A549 (cell line): ENCODE measurements at regions of chr17 and their contacts with region 1.

Region 1: GRCh38 chr17:16353317-16354174 is at the start of gene CENPV:
- DNase-seq: peak; percentile 72 to 91
- ATAC-seq: peak; percentile 80 to 89
- H3K4me3 ChIP-seq: peak within 1 kb of the TSS; percentile 71
- H3K27ac ChIP-seq: peak within 1 kb of the TSS; percentile 87 to 96
- H3K4me1 ChIP-seq: peaks cover 12% of the 10 kb centered on the region
- CTCF ChIP-seq: peak; percentile 78
- EP300 ChIP-seq: no peak
- POLR2A ChIP-seq: peak; percentile 82
- RAD21 ChIP-seq: no peak
- polyA plus RNA-seq, gene CENPV: 191 and 202 TPM in 2 replicates

Region 2: DNA sequence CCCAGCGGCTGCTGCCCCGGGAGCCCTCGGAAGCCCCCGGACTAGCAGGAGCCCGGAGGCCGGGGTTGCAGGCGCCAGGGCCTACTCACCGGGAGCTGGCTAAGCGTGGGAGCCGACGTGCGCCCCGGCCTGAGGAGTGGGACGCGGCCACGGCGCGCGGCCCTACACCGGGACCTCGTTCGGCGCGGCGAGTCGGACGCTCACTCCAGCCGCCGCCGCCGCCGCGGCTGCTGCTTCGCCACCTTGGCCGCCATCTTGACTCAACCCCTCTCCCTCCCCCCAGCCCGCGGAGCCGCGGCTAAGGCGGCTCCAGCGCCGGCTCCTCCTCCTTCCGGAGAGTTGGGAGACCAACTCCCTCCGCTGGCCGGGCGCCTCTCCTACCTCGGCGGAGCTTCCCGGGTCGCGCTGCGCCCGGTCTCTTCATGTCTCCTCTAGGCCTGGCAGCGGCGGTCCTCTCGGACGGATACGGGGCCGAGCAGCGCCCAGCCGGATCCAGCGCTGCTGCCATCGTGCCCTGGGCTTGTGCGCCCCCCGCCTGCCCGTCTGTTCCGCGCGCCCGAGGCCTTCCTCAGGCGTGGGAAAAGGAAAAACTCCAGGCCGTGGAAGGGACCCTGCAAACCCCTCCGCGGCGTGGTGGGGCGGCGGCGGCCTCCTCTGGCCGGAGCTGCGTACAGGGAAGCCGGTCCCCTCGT is 138.1 kb before region 1 on chr17 and contains the start of gene NCOR1:
- CTCF ChIA-PET with region 1: interaction called, 5 read pairs
- POLR2A ChIA-PET with region 1: interaction called, 11 read pairs
- DNase-seq: peak; percentile 80 to 97
- ATAC-seq: peak; percentile 89 to 92
- H3K4me3 ChIP-seq: peak within 1 kb of the TSS; percentile 75
- H3K27ac ChIP-seq: peak within 1 kb of the TSS; percentile 96 to 97
- H3K4me1 ChIP-seq: peaks cover 34% of the 10 kb centered on the region
- CTCF ChIP-seq: peak; percentile 35; the same call in 2 of the 3 replicates
- EP300 ChIP-seq: no peak
- POLR2A ChIP-seq: peak; percentile 98
- RAD21 ChIP-seq: peak; percentile 30 to 48
- polyA plus RNA-seq, gene NCOR1: 190 and 194 TPM in 2 replicates

Region 3: DNA sequence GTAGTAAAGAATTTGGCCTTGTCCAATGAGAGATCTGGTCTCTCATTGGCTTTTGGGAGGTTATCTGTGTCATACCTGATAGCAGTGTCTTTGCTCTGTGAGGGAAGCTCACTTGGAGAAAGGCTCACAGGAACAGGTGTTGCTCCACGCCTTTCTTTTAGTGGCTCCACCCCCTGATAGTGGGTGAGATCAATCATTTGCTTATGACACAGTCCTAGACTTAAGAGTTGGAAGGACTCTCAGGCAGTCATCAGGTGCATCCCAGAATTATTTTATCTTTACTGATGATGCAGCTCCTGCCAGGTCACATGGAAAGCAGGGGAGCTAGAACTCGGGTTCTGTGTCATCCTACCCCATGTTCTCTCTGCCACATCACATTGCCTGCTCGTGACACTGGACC is 59.6 kb before region 1 on chr17:
- CTCF ChIA-PET with region 1: interaction called, 100 read pairs
- POLR2A ChIA-PET with region 1: interaction called, 57 read pairs
- DNase-seq: no peak
- ATAC-seq: 0 out of 6 replicates have a peak, but pooled peaks of 1 of the 2 experiments have one; percentile 6
- H3K4me3 ChIP-seq: no peak overlapping the region
- H3K27ac ChIP-seq: peak overlapping the region in 1 of 2 experiments; percentile 42; a peak in 3 of 6 replicates
- H3K4me1 ChIP-seq: peaks cover 40% of the 10 kb centered on the region
- CTCF ChIP-seq: no peak
- EP300 ChIP-seq: no peak
- POLR2A ChIP-seq: no peak
- RAD21 ChIP-seq: no peak

Region 4: DNA sequence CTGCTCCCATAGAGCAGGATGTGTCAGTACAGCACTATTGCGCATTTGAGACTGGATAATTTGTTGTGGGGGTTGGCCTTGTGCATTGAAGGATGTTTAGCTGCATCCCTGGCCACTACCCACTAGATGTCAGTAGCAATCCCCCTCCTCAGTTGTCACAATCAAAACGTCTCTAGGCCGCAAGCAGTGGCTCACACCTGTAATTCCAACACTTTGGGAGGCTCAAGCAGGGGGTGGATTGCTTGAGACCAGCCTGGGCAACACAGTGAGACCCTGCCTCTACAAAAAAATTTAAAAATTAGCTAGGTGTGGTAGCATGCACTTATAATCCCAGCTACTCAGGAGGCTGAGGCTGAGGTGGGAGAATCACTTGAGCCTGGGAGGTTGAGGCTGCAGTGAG is 48.7 kb before region 1 on chr17:
- CTCF ChIA-PET with region 1: interaction called, 100 read pairs
- POLR2A ChIA-PET with region 1: interaction called, 3 read pairs
- DNase-seq: peak in 1 of 2 experiments; percentile 78
- ATAC-seq: peak; percentile 93 to 95
- H3K4me3 ChIP-seq: no peak overlapping the region
- H3K27ac ChIP-seq: peak overlapping the region; percentile 20 to 58; a peak in 4 of 6 replicates
- H3K4me1 ChIP-seq: peaks cover 18% of the 10 kb centered on the region
- CTCF ChIP-seq: peak; percentile 72
- EP300 ChIP-seq: no peak
- POLR2A ChIP-seq: no peak
- RAD21 ChIP-seq: peak; percentile 80 to 83

Region 5: GRCh38 chr17:16329519-16330271 is 23.9 kb before region 1 on chr17:
- CTCF ChIA-PET with region 1: interaction called, 23 read pairs
- POLR2A ChIA-PET with region 1: interaction called, 3 read pairs
- DNase-seq: peak; percentile 64 to 67
- ATAC-seq: peak; percentile 87 to 88
- H3K4me3 ChIP-seq: 0 out of 3 replicates have a peak overlapping the region, but pooled peaks have one; percentile 5
- H3K27ac ChIP-seq: peak overlapping the region; percentile 62 to 79
- H3K4me1 ChIP-seq: peaks cover 39% of the 10 kb centered on the region
- CTCF ChIP-seq: no peak
- EP300 ChIP-seq: no peak
- POLR2A ChIP-seq: no peak
- RAD21 ChIP-seq: no peak

Region 6: DNA sequence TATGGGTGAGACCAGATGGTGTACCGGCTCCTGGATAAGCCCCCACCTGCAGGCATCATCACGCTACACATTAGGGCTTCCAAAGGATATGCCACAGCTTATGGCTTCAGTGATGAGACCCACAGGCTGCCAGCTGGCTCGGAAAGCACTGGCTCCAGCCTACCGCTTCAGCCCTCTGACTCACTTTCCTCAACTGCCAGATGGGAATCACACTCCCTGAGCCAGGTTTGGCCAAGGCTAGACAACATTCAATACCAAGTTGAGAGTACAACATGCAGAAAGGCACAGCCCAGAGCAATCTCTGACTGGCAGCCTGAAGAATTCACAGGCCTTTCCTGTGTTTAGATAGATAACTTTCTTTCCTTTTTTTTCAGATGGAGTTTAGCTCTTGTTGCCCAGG is 10.6 kb before region 1 on chr17:
- CTCF ChIA-PET with region 1: interaction called, 85 read pairs
- POLR2A ChIA-PET with region 1: interaction called, 11 read pairs
- DNase-seq: no peak
- ATAC-seq: no peak
- H3K4me3 ChIP-seq: no peak overlapping the region
- H3K27ac ChIP-seq: no peak overlapping the region
- H3K4me1 ChIP-seq: peaks cover 13% of the 10 kb centered on the region
- CTCF ChIP-seq: no peak
- EP300 ChIP-seq: no peak
- POLR2A ChIP-seq: no peak
- RAD21 ChIP-seq: no peak

Region 7: GRCh38 chr17:16438557-16439302 is 85.2 kb after region 1 on chr17:
- CTCF ChIA-PET with region 1: interaction called, 3 read pairs
- POLR2A ChIA-PET with region 1: interaction called, 24 read pairs
- DNase-seq: peak; percentile 100
- ATAC-seq: peak; percentile 84 to 89
- H3K4me3 ChIP-seq: peak overlapping the region; percentile 75
- H3K27ac ChIP-seq: peak overlapping the region; percentile 90 to 99
- H3K4me1 ChIP-seq: peaks cover 37% of the 10 kb centered on the region
- CTCF ChIP-seq: no peak
- EP300 ChIP-seq: no peak
- POLR2A ChIP-seq: peak; percentile 96
- RAD21 ChIP-seq: no peak; a peak in 1 of 5 replicates